ENCODE measurements at regions of chr1 and their contacts with region 1.

Region 1: DNA sequence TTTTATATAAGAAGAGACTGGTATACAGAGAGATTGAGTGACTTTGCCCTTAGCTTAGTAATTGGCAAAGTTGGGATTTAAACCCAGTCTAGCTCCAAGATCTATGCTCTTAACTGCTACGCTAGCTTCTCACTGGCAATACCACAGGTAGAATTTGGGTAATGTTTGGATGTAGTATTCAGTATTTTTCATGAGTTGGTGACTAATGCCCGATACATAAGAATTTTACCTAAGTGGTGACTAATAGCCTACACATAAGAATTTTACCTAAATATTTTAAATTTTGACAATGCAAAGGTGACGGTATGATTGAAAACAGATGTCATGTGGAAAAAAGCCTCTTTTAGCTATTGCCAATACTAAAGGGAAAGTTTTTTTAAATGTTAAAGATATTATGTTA is 24.3 kb downstream of the GPSM2 start:
- DNase-seq: no peak

Region 2: GRCh38 chr1:108828022-108828961 is 72.8 kb before region 1 on chr1:
- in situ Hi-C with region 1: loop called (anchors 10 kb)
- DNase-seq: peak; percentile 80

Region 3: DNA sequence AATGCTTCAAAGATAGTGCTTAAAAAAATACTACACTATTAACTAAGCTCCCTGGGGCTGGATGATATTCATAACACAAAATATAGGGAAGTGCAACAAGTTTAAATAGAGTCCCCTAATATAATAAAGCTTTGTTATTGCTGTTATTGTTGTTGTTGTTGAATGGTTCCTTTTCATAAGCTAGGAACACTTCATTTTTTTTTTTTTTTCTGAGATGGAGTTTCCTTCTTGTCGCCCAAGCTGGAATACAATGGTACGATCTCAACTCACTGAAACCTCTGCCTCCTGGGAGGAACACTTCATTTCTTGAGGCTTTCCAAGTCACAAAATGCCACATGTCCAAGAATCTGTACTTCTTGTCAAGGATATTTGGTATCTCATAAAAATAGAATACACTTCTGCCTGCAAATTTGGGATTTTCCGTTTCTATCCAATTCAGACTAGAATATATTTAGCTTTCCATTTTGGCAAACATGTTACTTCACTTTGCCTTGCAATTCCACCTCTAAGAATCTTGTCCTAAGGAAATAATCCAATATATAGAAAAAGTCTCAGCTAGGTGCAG is 119.7 kb after region 1 on chr1:
- in situ Hi-C with region 1: no loop called
- DNase-seq: no peak